A549 (cell line): ENCODE measurements at regions of chr1 and their contacts with region 1.

Region 1: GRCh38 chr1:6359216-6360116 is 34.1 kb downstream of the ACOT7 start:
- DNase-seq: peak in 1 of 2 experiments; percentile 48
- ATAC-seq: peak; percentile 68 to 70
- H3K4me3 ChIP-seq: no peak overlapping the region
- H3K27ac ChIP-seq: peak overlapping the region; percentile 58 to 82
- H3K4me1 ChIP-seq: peaks cover 29% of the 10 kb centered on the region
- CTCF ChIP-seq: no peak
- EP300 ChIP-seq: no peak
- POLR2A ChIP-seq: no peak
- RAD21 ChIP-seq: no peak

Region 2: GRCh38 chr1:6378096-6378746 is 18.8 kb after region 1 on chr1:
- CTCF ChIA-PET with region 1: interaction called, 575 read pairs
- POLR2A ChIA-PET with region 1: no interaction called
- DNase-seq: no peak
- ATAC-seq: peak; percentile 83 to 87
- H3K4me3 ChIP-seq: no peak overlapping the region
- H3K27ac ChIP-seq: no peak overlapping the region
- H3K4me1 ChIP-seq: no peaks in the 10 kb centered on the region
- CTCF ChIP-seq: peak; percentile 19; the same call in 2 of the 3 replicates
- EP300 ChIP-seq: no peak
- POLR2A ChIP-seq: no peak
- RAD21 ChIP-seq: no peak

Region 3: GRCh38 chr1:6393400-6394187 is 34.1 kb after region 1 on chr1 and contains the start of gene ACOT7:
- CTCF ChIA-PET with region 1: interaction called, 575 read pairs
- POLR2A ChIA-PET with region 1: interaction called, 5 read pairs
- DNase-seq: peak; percentile 68 to 89
- ATAC-seq: peak; percentile 93 to 94
- H3K4me3 ChIP-seq: peak within 1 kb of the TSS; percentile 52
- H3K27ac ChIP-seq: peak within 1 kb of the TSS; percentile 86 to 93
- H3K4me1 ChIP-seq: peaks cover 9% of the 10 kb centered on the region
- CTCF ChIP-seq: no peak
- EP300 ChIP-seq: no peak
- POLR2A ChIP-seq: peak; percentile 20; the same call in 1 of the 2 replicates
- RAD21 ChIP-seq: no peak
- polyA plus RNA-seq, gene ACOT7: 49.6 and 50.9 TPM in 2 replicates

Region 4: DNA sequence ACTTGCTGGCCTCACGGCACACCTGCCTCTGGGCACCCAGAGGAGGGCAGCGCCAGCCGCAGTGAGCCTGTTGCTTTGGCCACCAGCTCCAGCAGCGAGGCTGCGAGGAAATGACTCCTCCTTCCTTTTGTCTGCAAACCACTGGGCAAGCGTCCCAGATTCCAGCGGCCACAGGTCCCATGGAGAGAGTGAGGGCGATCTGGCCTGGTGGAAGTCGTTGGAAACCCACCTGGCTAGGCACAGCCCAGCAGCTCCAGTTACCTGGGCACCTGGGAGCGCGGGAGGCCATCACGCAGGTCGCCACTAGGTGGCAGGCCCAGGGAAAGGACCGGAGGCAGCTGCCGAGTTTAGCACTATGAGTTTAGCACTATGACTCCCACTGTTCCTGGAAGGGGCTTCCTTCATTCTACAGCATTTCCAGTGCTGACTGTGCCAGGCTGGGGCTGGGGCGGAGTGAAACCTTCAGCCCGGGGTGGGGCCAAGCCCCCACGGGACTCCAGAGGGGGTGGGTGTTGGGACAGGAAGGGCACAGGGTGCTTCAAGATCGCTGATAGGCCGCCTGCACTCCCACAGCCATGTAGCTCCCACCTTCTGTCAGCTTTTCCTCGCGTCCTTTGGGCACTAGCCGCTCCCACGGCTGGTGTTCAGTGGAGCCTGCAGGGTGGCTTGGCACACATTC is 64.0 kb after region 1 on chr1:
- CTCF ChIA-PET with region 1: interaction called, 15 read pairs
- POLR2A ChIA-PET with region 1: no interaction called
- DNase-seq: peak in 1 of 2 experiments; percentile 52
- ATAC-seq: peak; percentile 60 to 78
- H3K4me3 ChIP-seq: peak overlapping the region; percentile 35; the same call in 2 of the 3 replicates
- H3K27ac ChIP-seq: peak overlapping the region in 1 of 2 experiments; percentile 38; a peak in 1 of 6 replicates
- H3K4me1 ChIP-seq: peaks cover 19% of the 10 kb centered on the region
- CTCF ChIP-seq: peak; percentile 54
- EP300 ChIP-seq: no peak
- POLR2A ChIP-seq: no peak
- RAD21 ChIP-seq: peak in 1 of 2 experiments; percentile 21; a peak in 2 of 5 replicates

Region 5: DNA sequence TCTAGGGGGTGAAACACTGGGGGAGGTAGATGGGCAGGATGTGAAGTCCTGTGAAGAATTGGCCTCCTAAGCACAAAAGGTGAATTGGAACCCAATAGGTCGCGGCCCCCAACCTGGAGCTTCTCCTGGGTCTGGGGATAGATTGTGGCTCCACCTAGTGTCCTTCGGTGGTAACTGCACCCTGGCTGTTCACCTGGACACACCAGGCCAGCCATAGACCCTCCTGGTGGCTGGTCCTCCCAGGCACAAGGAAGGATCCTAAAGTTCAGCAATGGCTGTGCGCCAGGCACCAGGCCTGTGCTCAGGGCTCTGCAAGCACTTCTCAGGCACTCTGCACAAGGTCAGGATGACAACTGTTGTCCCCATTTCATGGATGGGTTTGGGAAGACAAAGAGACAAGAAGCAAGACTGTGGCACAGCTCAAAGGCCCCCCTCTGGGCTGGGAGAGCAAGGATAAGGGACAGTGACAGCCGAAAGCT is 78.6 kb after region 1 on chr1:
- CTCF ChIA-PET with region 1: interaction called, 28 read pairs
- POLR2A ChIA-PET with region 1: no interaction called
- DNase-seq: peak; percentile 73 to 76
- ATAC-seq: peak; percentile 74 to 83
- H3K4me3 ChIP-seq: no peak overlapping the region
- H3K27ac ChIP-seq: no peak overlapping the region
- H3K4me1 ChIP-seq: peaks cover 5% of the 10 kb centered on the region; the same call in 1 of the 3 replicates
- CTCF ChIP-seq: peak; percentile 56
- EP300 ChIP-seq: no peak
- POLR2A ChIP-seq: no peak
- RAD21 ChIP-seq: peak; percentile 50 to 51; a peak in 4 of 5 replicates

Region 6: GRCh38 chr1:6513320-6513801 is 153.9 kb after region 1 on chr1:
- CTCF ChIA-PET with region 1: no interaction called
- POLR2A ChIA-PET with region 1: no interaction called
- DNase-seq: no peak
- ATAC-seq: no peak
- H3K4me3 ChIP-seq: no peak overlapping the region
- H3K27ac ChIP-seq: no peak overlapping the region
- H3K4me1 ChIP-seq: no peaks in the 10 kb centered on the region
- CTCF ChIP-seq: no peak
- EP300 ChIP-seq: no peak
- POLR2A ChIP-seq: no peak
- RAD21 ChIP-seq: no peak